ENCODE measurements at regions of chr11 and their contacts with region 1.

Region 1: GRCh38 chr11:65575568-65576231 is at the start of gene EHBP1L1:
- DNase-seq: no peak
- H3K4me3 ChIP-seq: peak within 1 kb of the TSS; percentile 74 to 78
- H3K27ac ChIP-seq: peak within 1 kb of the TSS; percentile 87 to 96
- H3K4me1 ChIP-seq: peaks cover 33% of the 10 kb centered on the region
- H3K27me3 ChIP-seq: no peaks in the 10 kb centered on the region
- CTCF ChIP-seq: no peak
- POLR2A ChIP-seq: peak; percentile 47
- total RNA-seq, gene EHBP1L1: 68.2 to 98.7 TPM

Region 2: GRCh38 chr11:65615229-65615941 is 39.7 kb after region 1 on chr11 and contains the start of gene PCNX3:
- intact Hi-C with region 1: loop called (anchors 2 kb)
- DNase-seq: peak; percentile 100
- H3K4me3 ChIP-seq: peak within 1 kb of the TSS; percentile 75 to 90
- H3K27ac ChIP-seq: peak within 1 kb of the TSS; percentile 93 to 94
- H3K4me1 ChIP-seq: peaks cover 37% of the 10 kb centered on the region
- H3K27me3 ChIP-seq: no peaks in the 10 kb centered on the region
- CTCF ChIP-seq: peak in 2 of 4 experiments; percentile 22 to 35
- POLR2A ChIP-seq: peak; percentile 37
- total RNA-seq, gene PCNX3: 32.0 to 67.9 TPM

Region 3: DNA sequence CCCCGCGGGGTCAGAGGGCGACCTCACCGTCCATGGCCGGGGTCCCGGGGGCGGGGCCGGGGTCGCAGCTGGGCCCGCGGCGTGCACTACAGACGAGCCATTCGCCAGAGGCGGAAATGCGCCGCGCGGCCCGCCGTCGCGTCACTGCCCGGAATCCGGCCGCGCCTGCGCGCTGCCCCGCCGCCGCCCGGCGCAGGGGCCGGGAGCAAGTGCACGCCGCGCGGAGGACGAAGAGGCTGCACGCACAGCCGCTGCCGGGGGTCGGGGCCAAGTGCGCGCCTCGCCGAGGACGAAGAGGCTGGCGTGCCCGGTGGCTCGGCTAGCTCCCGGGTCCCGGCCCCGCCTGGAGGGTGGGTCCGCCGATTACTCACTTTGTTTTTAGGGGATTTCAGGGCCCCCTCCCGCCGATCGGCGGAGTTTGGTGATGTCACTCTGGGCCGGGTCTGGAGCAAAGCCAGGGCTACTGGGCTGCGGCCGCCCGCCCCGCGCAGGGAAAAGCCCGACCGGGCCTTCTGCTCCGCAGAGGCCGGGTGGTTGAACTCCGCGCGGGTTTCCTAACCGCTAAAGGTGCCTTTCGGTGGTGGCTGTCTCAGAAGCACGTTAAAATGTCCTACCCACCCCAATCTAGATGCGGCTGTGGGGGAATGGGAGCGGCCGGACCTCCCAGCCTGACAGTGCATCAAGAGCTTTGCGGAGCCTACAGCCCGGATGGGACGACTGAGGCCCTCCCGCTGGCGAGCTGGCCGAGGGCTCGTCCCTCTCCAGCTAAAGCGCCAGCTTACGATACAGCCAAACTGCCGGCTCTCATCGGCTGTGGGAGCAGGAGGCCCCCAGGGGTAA is 87.3 kb after region 1 on chr11 and contains the start of gene RELA:
- intact Hi-C with region 1: loop called (anchors 5 kb)
- DNase-seq: peak; percentile 92
- H3K4me3 ChIP-seq: peak within 1 kb of the TSS; percentile 97 to 100
- H3K27ac ChIP-seq: peak within 1 kb of the TSS; percentile 98 to 99
- H3K4me1 ChIP-seq: peaks cover 15% of the 10 kb centered on the region
- H3K27me3 ChIP-seq: no peaks in the 10 kb centered on the region
- CTCF ChIP-seq: peak in 2 of 4 experiments; percentile 34 to 48
- POLR2A ChIP-seq: peak; percentile 92
- total RNA-seq, gene RELA: 51.8 to 98.4 TPM

Measured in prostate gland (tissue), 2 donors.